Sigmoid colon (tissue), 7 donors: ENCODE measurements at regions of chr11 and their contacts with region 1.

Region 1: DNA sequence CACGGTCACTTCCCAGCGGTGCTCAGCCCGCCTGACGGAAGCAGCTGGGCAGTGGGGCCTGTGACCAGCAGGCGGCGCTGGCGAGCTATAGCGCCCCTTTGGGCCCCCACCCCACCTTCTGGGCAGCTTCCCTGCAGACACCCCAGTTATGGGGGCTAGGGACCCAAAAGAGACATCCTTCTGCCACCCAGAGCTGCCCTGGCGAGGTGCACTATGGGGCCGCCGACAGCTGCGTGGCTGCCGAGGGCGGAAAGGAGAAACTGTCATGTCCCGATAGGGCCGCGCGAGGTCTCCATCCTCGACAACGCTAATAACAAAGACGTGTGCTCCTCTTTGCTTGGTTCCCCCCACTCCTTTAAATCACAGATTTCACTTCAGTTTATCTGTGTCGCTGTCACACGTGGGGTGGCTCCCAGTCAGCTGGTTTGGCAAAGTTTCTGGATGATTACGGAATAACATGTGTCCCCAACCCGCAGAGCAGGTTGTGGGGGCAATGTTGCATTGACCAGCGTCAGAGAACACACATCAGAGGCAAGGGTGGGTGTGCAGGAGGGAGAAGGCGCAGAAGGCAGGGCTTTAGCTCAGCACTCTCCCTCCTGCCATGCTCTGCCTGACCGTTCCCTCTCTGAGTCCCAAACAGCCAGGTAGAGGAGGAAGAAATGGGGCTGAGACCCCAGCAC is 674 bp upstream of the MYO7A start:
- DNase-seq: no peak
- H3K4me3 ChIP-seq: peak overlapping the region; percentile 17 to 43 (median 40)
- H3K27ac ChIP-seq: no peak overlapping the region
- H3K4me1 ChIP-seq: peaks cover 0 to 24% (median 22%) of the 10 kb centered on the region in 4 donors
- H3K27me3 ChIP-seq: peaks cover 0 to 14% (median 0%) of the 10 kb centered on the region in 3 donors
- CTCF ChIP-seq: peak; percentile 78 to 99 (median 98)
- EP300 ChIP-seq: no peak
- POLR2A ChIP-seq: no peak

Region 2: DNA sequence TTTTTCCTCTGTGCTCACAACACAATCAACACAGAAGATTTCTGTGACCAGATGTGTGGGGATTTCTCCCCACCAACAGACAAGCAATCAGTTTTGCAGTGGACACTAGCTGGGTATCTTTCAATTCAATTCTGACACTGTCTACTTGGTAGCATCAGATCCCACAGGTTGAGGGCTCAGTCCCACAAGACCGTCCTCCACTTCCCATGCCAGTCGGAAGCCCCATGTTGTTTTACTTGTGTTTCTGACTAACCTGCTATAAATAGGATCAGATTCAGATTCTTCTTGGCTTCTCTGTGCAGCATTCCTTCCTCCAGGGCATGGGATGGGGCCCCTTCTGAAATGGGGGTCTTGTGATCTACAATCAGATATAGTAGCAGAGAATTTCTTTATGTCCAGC is 247.1 kb before region 1 on chr11:
- intact Hi-C with region 1: no loop called
- DNase-seq: no peak
- H3K4me3 ChIP-seq: no peak overlapping the region
- H3K27ac ChIP-seq: no peak overlapping the region
- H3K4me1 ChIP-seq: peaks cover 0 to 1% (median 0%) of the 10 kb centered on the region in 4 donors
- H3K27me3 ChIP-seq: no peaks in the 10 kb centered on the region
- CTCF ChIP-seq: no peak
- EP300 ChIP-seq: no peak
- POLR2A ChIP-seq: no peak

Region 3: DNA sequence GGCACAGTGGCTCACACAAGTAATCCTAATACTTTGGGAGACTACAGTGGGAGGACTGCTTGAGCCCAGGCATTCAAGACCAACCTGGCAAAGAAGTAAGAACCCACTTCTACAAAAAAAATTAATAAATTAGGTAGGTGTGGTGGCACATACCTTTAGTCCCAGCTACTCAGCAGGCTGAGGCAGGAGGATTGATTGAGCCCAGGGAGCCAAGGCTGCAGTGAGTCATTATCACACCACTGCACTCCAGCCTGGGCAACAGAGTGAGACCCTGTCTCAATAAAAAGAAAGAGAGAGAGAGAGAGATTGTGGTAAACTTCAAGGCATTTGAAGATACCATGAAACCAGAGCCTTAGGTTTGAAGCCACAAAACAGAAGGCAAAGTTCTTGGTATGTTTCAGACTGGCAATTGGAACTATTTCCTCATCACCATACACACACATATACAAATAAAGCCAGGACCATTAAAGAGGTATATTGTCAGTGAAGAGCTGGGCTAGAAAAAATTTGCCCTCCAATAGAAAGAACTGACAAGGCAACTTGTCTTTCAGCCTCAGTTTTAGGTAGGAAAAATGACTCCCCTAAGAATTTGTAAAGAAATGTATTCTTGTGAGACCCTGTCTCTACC is 117.7 kb before region 1 on chr11:
- intact Hi-C with region 1: no loop called
- DNase-seq: no peak
- H3K4me3 ChIP-seq: no peak overlapping the region
- H3K27ac ChIP-seq: no peak overlapping the region
- H3K4me1 ChIP-seq: no peaks in the 10 kb centered on the region
- H3K27me3 ChIP-seq: no peaks in the 10 kb centered on the region
- CTCF ChIP-seq: no peak
- EP300 ChIP-seq: no peak
- POLR2A ChIP-seq: no peak

Region 4: GRCh38 chr11:77187776-77188632 is 60.6 kb after region 1 on chr11:
- intact Hi-C with region 1: loop called (anchors 2 kb)
- DNase-seq: peak; percentile 83
- H3K4me3 ChIP-seq: no peak overlapping the region
- H3K27ac ChIP-seq: no peak overlapping the region
- H3K4me1 ChIP-seq: no peaks in the 10 kb centered on the region
- H3K27me3 ChIP-seq: peaks cover 0 to 9% (median 0%) of the 10 kb centered on the region in 3 donors
- CTCF ChIP-seq: peak; percentile 48 to 85 (median 68)
- EP300 ChIP-seq: no peak
- POLR2A ChIP-seq: no peak

Region 5: GRCh38 chr11:77547863-77548551 is 420.6 kb after region 1 on chr11:
- intact Hi-C with region 1: loop called (anchors 2 kb)
- DNase-seq: no peak
- H3K4me3 ChIP-seq: no peak overlapping the region
- H3K27ac ChIP-seq: no peak overlapping the region
- H3K4me1 ChIP-seq: peaks cover 0 to 9% (median 0%) of the 10 kb centered on the region in 4 donors
- H3K27me3 ChIP-seq: no peaks in the 10 kb centered on the region
- CTCF ChIP-seq: peak in 3 of 4 experiments; percentile 48 to 65 (median 62)
- EP300 ChIP-seq: no peak
- POLR2A ChIP-seq: no peak